GM12878 (cell line): ENCODE measurements at regions of chr9 and their contacts with region 1.

Region 1: GRCh38 chr9:6584881-6585597 is 60.5 kb downstream of the GLDC start:
- DNase-seq: no peak
- ATAC-seq: peak; percentile 85
- H3K4me3 ChIP-seq: no peak overlapping the region
- H3K27ac ChIP-seq: no peak overlapping the region
- H3K4me1 ChIP-seq: no peaks in the 10 kb centered on the region
- H3K27me3 ChIP-seq: no peaks in the 10 kb centered on the region
- CTCF ChIP-seq: peak in 2 of 3 experiments; percentile 13 to 35; a peak in 3 of 6 replicates
- EP300 ChIP-seq: no peak
- POLR2A ChIP-seq: no peak
- RAD21 ChIP-seq: peak; percentile 42; the same call in 1 of the 2 replicates

Region 2: GRCh38 chr9:6605202-6605601 is 20.2 kb after region 1 on chr9:
- CTCF ChIA-PET with region 1: interaction called, 36 read pairs
- POLR2A ChIA-PET with region 1: no interaction called
- RAD21 ChIA-PET with region 1: interaction called, 11 read pairs
- SMC1A ChIA-PET with region 1: interaction called, 3 read pairs
- in situ Hi-C with region 1: no loop called
- intact Hi-C with region 1: no loop called
- DNase-seq: peak; percentile 71
- ATAC-seq: peak; percentile 99
- H3K4me3 ChIP-seq: peak overlapping the region; percentile 24; the same call in 1 of the 2 replicates
- H3K27ac ChIP-seq: peak overlapping the region; percentile 64
- H3K4me1 ChIP-seq: peaks cover 14% of the 10 kb centered on the region
- H3K27me3 ChIP-seq: no peaks in the 10 kb centered on the region
- CTCF ChIP-seq: no peak
- EP300 ChIP-seq: peak; percentile 13 to 49; a peak in 1 of 4 replicates
- POLR2A ChIP-seq: no peak
- RAD21 ChIP-seq: no peak

Region 3: DNA sequence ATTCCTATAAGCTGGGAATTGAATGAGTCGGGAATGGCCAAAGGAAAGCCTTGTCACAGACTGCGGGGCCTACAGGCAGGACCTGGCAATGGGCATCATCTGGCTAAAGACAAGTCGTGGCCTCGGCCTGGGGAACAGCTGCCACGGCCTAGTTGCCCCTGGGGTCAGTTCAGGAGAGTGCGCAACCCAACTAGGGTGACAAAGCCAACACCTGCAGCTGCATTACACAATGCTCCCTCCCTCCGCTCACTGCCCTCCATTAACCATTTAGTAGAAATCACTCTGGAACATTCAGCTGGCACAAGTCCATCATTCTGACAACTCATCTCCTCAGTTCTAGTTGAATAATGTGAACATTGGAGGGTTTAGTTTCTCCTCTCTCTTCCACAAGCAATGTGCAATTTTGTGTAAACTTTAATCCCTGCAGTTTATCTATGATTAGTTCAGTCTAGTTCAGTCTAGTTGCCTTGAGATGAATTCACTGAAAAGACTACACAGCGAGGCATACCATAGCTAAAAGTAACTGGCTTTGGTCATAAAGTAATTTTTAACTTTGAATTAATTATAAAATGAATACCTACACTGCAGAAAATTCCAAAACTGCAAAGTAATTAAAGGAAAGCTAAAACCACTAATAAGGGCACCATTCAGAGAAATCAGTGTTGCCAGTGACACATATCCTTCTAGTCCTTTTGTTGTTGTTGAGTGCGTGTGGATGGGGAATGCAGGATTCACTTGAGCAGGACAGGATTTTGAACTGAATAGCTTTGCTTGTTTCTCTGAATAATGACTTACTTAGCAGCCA is 55.4 kb after region 1 on chr9:
- CTCF ChIA-PET with region 1: interaction called, 37 read pairs
- POLR2A ChIA-PET with region 1: no interaction called
- RAD21 ChIA-PET with region 1: no interaction called
- SMC1A ChIA-PET with region 1: interaction called, 11 read pairs
- in situ Hi-C with region 1: no loop called
- intact Hi-C with region 1: no loop called
- DNase-seq: no peak
- ATAC-seq: no peak
- H3K4me3 ChIP-seq: no peak overlapping the region
- H3K27ac ChIP-seq: no peak overlapping the region
- H3K4me1 ChIP-seq: peaks cover 7% of the 10 kb centered on the region; the same call in 1 of the 2 replicates
- H3K27me3 ChIP-seq: no peaks in the 10 kb centered on the region
- CTCF ChIP-seq: no peak
- EP300 ChIP-seq: no peak
- POLR2A ChIP-seq: no peak
- RAD21 ChIP-seq: no peak

Region 4: DNA sequence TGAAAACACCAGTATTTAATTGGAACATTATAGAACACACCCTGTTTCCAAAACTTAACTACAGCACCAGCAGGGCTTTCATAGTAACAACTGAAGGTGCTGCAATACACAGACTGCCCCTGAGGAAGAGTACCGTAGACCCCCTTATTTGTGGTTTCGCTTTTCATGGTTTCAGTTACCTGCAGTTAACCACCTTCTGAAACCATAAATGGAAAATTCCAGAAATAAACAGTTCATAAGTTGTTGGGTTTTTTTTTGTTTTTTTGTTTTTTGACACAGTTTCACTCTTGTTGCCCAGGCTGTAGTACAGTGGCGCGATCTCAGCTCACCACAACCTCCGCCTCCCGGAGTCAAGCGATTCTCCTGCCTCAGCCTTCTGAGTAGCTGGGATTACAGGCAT is 70.0 kb after region 1 on chr9:
- CTCF ChIA-PET with region 1: interaction called, 15 read pairs
- POLR2A ChIA-PET with region 1: no interaction called
- RAD21 ChIA-PET with region 1: interaction called, 4 read pairs
- SMC1A ChIA-PET with region 1: interaction called, 7 read pairs
- in situ Hi-C with region 1: loop called (anchors 5 kb)
- intact Hi-C with region 1: no loop called
- DNase-seq: peak; percentile 84
- ATAC-seq: peak; percentile 91
- H3K4me3 ChIP-seq: peak overlapping the region; percentile 21; the same call in 1 of the 2 replicates
- H3K27ac ChIP-seq: peak overlapping the region; percentile 49
- H3K4me1 ChIP-seq: peaks cover 29% of the 10 kb centered on the region
- H3K27me3 ChIP-seq: no peaks in the 10 kb centered on the region
- CTCF ChIP-seq: no peak
- EP300 ChIP-seq: peak; percentile 68 to 77; a peak in 3 of 4 replicates
- POLR2A ChIP-seq: no peak
- RAD21 ChIP-seq: 0 out of 2 replicates have a peak, but pooled peaks have one; percentile 8

Region 5: GRCh38 chr9:6673326-6674025 is 88.4 kb after region 1 on chr9:
- CTCF ChIA-PET with region 1: interaction called, 46 read pairs
- POLR2A ChIA-PET with region 1: interaction called, 3 read pairs
- RAD21 ChIA-PET with region 1: interaction called, 20 read pairs
- SMC1A ChIA-PET with region 1: interaction called, 22 read pairs
- in situ Hi-C with region 1: no loop called
- intact Hi-C with region 1: no loop called
- DNase-seq: no peak
- ATAC-seq: peak; percentile 77
- H3K4me3 ChIP-seq: no peak overlapping the region
- H3K27ac ChIP-seq: no peak overlapping the region
- H3K4me1 ChIP-seq: peaks cover 9% of the 10 kb centered on the region
- H3K27me3 ChIP-seq: no peaks in the 10 kb centered on the region
- CTCF ChIP-seq: no peak
- EP300 ChIP-seq: peak; percentile 66 to 77; a peak in 2 of 4 replicates
- POLR2A ChIP-seq: no peak
- RAD21 ChIP-seq: no peak

Region 6: GRCh38 chr9:6739218-6739617 is 154.2 kb after region 1 on chr9:
- CTCF ChIA-PET with region 1: interaction called, 32 read pairs
- POLR2A ChIA-PET with region 1: interaction called, 3 read pairs
- RAD21 ChIA-PET with region 1: interaction called, 18 read pairs
- SMC1A ChIA-PET with region 1: interaction called, 23 read pairs
- in situ Hi-C with region 1: loop called (anchors 5 kb)
- intact Hi-C with region 1: loop called (anchors 1 kb)
- DNase-seq: no peak
- ATAC-seq: peak; percentile 59
- H3K4me3 ChIP-seq: no peak overlapping the region
- H3K27ac ChIP-seq: no peak overlapping the region
- H3K4me1 ChIP-seq: no peaks in the 10 kb centered on the region
- H3K27me3 ChIP-seq: no peaks in the 10 kb centered on the region
- CTCF ChIP-seq: peak; percentile 8 to 46 (median 36); a peak in 4 of 6 replicates
- EP300 ChIP-seq: no peak
- POLR2A ChIP-seq: no peak
- RAD21 ChIP-seq: peak; percentile 57